ENCODE measurements at regions of chr11 and their contacts with region 1.

Region 1: GRCh38 chr11:92941676-92942571 is 27.5 kb upstream of the MTNR1B start:
- DNase-seq: no peak
- H3K4me3 ChIP-seq: no peak overlapping the region
- CTCF ChIP-seq: peak; percentile 54

Region 2: GRCh38 chr11:92955860-92956259 is 13.9 kb after region 1 on chr11:
- CTCF ChIA-PET with region 1: interaction called, 33 read pairs
- POLR2A ChIA-PET with region 1: no interaction called
- DNase-seq: no peak
- H3K4me3 ChIP-seq: no peak overlapping the region
- CTCF ChIP-seq: no peak

Region 3: DNA sequence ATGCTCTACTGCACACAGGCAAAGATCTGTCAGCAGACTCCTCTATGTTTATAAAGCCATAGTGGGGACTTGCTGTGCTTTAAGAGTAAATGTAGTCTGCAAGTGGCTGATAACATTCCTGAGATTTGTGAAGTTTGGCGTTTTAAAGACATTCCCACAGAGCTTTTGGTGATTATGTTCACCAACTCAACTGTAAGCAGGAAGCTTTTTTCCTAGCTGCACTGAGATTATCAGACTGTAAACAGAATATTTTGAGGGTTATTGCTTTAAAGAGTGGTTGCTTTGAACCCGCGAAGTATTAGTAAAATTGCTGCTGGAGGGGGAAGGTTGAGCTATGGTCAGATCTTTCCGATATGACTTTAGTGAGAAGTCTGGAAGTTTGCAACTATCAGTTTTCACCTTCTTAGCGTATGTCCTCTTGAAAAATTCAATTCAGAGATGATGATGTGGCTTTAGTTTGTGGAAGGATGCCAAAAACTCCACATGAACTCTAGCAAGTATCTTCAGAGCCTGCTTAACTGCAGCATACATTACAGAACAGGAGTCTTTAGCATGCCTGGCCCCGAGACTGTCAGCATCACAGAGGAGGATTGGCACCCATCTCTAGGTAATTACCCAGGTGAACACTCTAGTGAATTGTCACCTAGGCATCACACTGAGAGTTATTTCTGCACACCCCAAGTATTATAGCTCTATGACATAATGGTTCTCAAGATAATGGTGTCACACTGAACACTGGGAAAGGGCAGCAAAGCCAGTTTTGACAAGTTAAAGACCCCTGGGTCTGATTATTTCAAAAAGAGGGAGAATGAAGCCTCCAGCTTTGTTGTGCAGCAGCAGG is 117.4 kb after region 1 on chr11:
- CTCF ChIA-PET with region 1: interaction called, 10 read pairs
- POLR2A ChIA-PET with region 1: no interaction called
- DNase-seq: no peak
- H3K4me3 ChIP-seq: no peak overlapping the region
- CTCF ChIP-seq: no peak

Region 4: GRCh38 chr11:93169950-93170561 is 228.1 kb after region 1 on chr11:
- CTCF ChIA-PET with region 1: interaction called, 46 read pairs
- POLR2A ChIA-PET with region 1: no interaction called
- DNase-seq: peak; percentile 3
- H3K4me3 ChIP-seq: no peak overlapping the region
- CTCF ChIP-seq: peak; percentile 40

Region 5: DNA sequence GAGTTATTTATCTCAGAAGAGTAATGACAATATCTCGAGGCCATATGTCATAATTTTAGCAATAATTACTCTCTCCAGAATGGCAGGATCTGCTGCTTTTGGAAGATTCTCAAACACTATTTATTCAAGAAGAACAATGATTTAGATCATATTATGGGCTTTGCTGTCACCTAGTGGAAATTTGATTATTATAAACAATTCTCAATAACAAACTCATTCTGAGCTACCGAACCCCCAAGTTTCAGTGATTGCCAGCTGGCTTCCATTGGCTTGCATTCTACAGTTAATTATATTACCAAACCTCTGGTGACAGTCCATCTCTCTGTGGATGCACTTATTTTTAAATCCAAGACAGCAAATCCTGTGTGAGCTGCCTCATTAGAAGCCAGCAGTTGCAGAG is 283.7 kb after region 1 on chr11:
- CTCF ChIA-PET with region 1: interaction called, 82 read pairs
- POLR2A ChIA-PET with region 1: no interaction called
- DNase-seq: no peak
- H3K4me3 ChIP-seq: no peak overlapping the region
- CTCF ChIP-seq: no peak

Region 6: DNA sequence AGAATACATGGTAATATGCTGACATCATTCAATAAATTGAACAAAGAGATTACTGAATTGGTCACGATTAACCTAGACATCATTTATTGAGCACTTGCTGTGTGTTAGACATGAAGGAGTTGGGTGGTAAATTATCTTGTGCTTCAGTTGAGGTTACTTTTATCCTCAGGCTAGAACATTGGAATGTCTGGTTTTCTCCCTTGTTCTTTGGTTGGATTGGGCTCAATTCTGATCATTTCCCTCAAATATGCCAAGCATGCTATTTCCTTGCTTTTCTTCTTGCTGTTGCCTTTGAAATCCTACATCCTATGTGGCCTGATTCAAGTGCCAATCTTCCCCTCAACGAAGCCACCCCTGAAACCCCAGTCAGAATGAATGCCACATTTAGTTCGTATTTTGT is 454.4 kb after region 1 on chr11:
- CTCF ChIA-PET with region 1: no interaction called
- POLR2A ChIA-PET with region 1: no interaction called
- DNase-seq: no peak
- H3K4me3 ChIP-seq: no peak overlapping the region
- CTCF ChIP-seq: no peak